Lower leg skin (tissue), 4 donors: ENCODE measurements at regions of chr1 and their contacts with region 1.

Region 1: GRCh38 chr1:99969729-99970621 is at the start of gene SLC35A3:
- DNase-seq: peak; percentile 60 to 96
- H3K4me3 ChIP-seq: peak within 1 kb of the TSS; percentile 72
- CTCF ChIP-seq: no peak
- POLR2A ChIP-seq: no peak
- total RNA-seq, gene SLC35A3: 19.6 to 23.9 (median 22.4) TPM

Region 2: GRCh38 chr1:98086796-98087441 is 1883.1 kb before region 1 on chr1:
- intact Hi-C with region 1: loop called (anchors 5 kb)
- DNase-seq: no peak
- H3K4me3 ChIP-seq: no peak overlapping the region
- CTCF ChIP-seq: no peak
- POLR2A ChIP-seq: no peak

Region 3: DNA sequence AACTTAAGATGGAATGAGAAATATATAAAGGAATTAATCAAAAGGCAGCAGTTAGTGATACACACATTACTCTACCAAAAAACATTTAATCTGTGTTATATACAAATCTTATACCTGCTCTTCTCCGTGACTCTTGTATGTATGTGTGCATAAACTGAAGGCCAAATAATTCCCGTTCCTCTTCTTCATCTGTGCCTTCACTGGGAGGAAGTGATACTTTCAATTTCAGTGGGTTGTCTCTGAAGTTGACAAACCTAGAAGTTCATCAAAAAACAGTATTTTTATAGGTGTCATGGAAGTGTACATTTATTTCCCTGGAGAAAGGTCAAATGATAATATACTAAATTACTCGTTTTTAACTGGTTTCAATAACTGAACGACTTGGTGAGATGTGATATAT is 182.3 kb after region 1 on chr1:
- intact Hi-C with region 1: no loop called
- DNase-seq: no peak
- H3K4me3 ChIP-seq: no peak overlapping the region
- CTCF ChIP-seq: no peak
- POLR2A ChIP-seq: no peak